ENCODE measurements at regions of chr19 and their contacts with region 1.

Region 1: DNA sequence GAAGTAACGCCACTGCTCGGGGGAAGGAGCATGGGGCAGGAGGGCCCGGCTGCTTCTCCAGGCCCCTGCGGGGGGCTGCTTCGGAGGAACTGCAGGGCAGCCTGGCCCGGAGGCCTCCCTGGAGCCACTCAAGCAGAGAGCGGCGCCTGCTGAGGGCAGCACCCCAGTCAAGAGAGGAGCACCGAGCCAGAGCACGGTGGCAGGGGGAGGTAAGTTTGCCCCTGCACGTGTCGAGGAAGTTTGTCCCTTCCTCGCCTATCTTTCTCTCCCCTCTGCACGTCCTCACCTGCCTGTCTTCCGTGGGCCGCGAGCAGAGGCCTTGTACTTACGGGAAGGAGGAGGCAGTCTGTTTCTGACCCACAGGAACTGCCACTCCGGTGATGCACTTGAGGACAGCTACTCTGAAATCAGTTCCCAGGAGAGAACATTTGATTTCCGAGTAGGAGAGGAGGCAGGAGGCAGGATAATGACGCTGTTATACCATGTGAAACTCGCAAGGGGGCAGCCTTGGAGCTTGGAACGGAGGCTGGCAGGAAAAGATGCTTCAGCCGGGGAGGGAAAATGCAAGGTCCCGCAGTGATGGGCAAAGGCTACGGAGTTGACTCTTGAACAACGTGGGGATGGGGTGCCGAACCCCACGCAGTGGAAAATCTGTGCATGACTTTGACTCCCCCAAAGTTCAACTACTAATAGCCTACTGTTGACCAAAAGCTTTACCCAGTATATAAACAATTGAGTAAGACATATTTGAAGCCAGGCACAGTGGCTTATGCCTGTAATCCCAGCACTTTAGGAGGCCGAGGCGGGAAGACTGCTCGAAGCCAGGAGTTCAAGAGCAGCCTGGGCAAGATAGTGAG is 5.0 kb downstream of the FFAR1 start:
- DNase-seq: peak; percentile 63
- ATAC-seq: peak; percentile 76

Region 2: GRCh38 chr19:35306473-35307246 is 46.0 kb before region 1 on chr19:
- intact Hi-C with region 1: no loop called
- DNase-seq: no peak
- ATAC-seq: no peak

Region 3: GRCh38 chr19:35468637-35469036 is 116.0 kb after region 1 on chr19:
- intact Hi-C with region 1: loop called (anchors 2 kb)
- DNase-seq: peak; percentile 37
- ATAC-seq: peak; percentile 89

Region 4: DNA sequence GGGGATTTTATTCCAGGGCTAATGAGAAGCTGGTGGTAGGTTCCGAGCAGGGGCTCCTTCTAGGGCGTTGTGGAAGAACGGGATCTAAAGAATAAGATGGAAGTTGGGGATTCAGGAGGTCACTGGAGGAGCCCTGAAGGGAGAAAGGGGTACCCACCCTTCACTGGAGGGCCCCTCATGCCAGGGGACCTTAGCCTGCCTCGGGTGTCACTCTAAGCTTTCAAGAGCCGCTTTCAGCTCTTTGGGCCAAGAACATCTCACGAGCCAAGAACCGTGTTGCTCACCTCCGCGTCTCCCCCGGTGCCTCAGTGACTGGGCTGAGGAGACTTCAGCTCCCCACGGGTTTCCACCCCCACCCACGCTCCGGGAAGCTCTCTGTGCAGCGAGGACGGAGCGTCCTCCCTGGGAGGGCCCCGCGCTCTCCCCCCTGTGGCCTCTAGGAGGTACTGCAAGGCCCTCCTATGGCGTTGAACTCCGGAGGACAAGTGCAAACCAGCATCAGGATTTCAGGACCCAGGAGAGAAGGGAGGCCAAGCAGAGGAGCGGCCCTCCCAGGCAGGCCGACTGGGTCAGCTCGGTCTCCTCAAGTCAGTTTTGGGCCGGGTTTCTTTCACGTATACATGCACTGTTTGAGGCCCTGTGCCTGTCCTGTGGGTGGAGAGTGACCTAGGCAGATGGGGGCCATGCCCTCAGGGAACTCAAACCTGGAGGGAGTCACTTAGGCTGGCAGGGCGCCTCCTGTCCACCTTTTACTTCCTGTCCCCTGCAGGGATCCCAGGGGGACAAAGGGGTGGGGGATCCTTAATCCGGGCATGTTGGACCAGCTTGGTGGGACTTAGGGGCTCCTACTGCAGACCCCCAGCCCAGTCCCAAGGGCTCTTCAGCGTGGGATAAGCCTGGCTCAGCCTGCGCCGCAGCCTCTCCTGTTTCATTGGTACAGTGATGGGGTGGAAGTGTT is 142.7 kb after region 1 on chr19:
- intact Hi-C with region 1: loop called (anchors 10 kb)
- DNase-seq: peak; percentile 79
- ATAC-seq: peak; percentile 93